Activated T-helper 1 cell treated with anti-CD3 and anti-CD28 coated beads, Interleukin-12 subunit alpha, Interleukin-12 subunit beta, Interleukin-2, Interleukin-4 antibody, amounts not matched to agents 30 ng/mL and 10 ng/mL and 1 ng/mL, durations not matched to agents 14 hours and 24 hours and 36 hours (primary cell): ENCODE measurements at regions of chr5 and their contacts with region 1.

Region 1: GRCh38 chr5:43191740-43192557 is at the start of gene NIM1K:
- DNase-seq: peak; percentile 39
- H3K4me3 Mint-ChIP-seq: peak within 1 kb of the TSS; percentile 85
- H3K27ac Mint-ChIP-seq: peak within 1 kb of the TSS; percentile 89
- H3K4me1 Mint-ChIP-seq: peaks cover 40% of the 10 kb centered on the region
- H3K27me3 Mint-ChIP-seq: peaks cover 22% of the 10 kb centered on the region
- total RNA-seq, gene NIM1K: 0.39 and 0.67 TPM in 2 replicates

Region 2: GRCh38 chr5:42912184-42912798 is 279.7 kb before region 1 on chr5:
- intact Hi-C with region 1: no loop called
- DNase-seq: no peak
- H3K4me3 Mint-ChIP-seq: no peak overlapping the region
- H3K27ac Mint-ChIP-seq: no peak overlapping the region
- H3K4me1 Mint-ChIP-seq: peaks cover 12% of the 10 kb centered on the region
- H3K27me3 Mint-ChIP-seq: peaks cover 9% of the 10 kb centered on the region

Region 3: DNA sequence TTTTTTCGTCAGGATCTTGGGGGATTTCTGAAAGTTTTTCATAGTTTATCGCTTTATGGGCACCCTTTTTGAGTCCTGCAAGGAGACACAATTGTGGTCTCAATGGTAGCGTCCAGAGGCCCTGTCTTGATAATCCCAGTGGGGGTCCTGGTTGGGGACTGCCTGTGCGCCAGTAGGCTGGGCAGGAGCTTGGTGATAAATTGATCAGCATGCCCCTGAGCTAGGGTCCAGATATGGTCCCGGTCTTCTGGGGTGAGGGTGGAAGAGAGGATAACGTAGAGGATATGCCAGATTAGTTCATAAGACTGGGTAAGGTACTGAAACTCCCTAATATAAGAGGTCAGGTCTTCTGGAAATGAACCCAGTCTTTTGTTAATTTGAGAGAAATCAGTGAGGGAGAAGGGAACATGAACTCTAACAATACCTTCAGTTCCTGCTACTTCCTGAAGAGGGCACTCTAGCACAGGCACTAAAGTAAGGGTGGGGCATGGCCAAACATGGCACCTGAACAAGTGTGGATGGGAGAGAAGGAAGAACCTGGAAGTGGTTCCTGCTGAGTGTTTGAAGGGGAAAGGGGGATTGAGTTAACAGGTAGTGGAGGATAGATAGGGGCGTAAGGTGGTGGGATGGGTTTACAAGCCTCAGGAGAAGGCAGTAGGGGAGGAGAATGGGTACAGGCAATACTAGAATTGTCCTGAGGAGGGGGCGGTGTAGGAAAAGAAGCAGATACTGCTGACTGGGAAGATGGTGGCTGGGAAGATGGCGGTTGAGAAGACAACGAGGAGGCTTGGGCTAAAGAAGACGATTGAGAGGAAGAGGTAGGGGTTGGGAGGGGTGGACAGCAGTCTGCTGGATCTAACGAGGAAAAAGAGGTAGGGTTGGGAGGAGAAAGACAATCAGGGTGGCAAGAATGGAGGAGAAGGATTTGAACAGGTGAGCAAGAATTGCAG is 118.1 kb before region 1 on chr5:
- intact Hi-C with region 1: loop called (anchors 2 kb)
- DNase-seq: peak; percentile 42
- H3K4me3 Mint-ChIP-seq: no peak overlapping the region
- H3K27ac Mint-ChIP-seq: peak overlapping the region; percentile 41
- H3K4me1 Mint-ChIP-seq: peaks cover 45% of the 10 kb centered on the region
- H3K27me3 Mint-ChIP-seq: no peaks in the 10 kb centered on the region

Region 4: DNA sequence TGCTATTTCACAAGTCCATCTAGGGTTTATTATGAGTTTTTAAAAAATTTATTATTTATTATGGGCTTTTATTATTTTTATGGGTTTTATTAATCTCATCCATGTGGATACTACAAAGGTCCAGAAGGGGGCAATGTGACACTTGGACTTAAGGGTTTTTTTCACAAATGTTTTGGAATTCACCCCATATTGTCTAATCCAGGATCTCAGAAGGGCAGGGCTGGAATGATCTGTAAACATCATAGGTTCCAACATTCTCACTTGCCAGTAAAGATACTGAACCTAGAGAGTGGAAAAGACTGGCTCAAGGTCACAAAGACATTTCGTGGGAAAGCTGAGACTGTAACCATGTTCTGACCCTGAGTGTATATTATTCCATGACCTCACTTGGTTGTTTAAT is 35.7 kb after region 1 on chr5:
- intact Hi-C with region 1: no loop called
- DNase-seq: no peak
- H3K4me3 Mint-ChIP-seq: no peak overlapping the region
- H3K27ac Mint-ChIP-seq: no peak overlapping the region
- H3K4me1 Mint-ChIP-seq: no peaks in the 10 kb centered on the region
- H3K27me3 Mint-ChIP-seq: no peaks in the 10 kb centered on the region